ENCODE measurements at regions of chr21 and their contacts with region 1.

Region 1: GRCh38 chr21:31873696-31874599 is 1.1 kb downstream of the HUNK start:
- DNase-seq: peak; percentile 79
- H3K4me3 ChIP-seq: peak overlapping the region; percentile 69
- H3K27ac ChIP-seq: peak overlapping the region; percentile 36
- H3K4me1 ChIP-seq: no peaks in the 10 kb centered on the region
- H3K27me3 ChIP-seq: peaks cover 7% of the 10 kb centered on the region
- CTCF ChIP-seq: peak; percentile 58

Region 2: DNA sequence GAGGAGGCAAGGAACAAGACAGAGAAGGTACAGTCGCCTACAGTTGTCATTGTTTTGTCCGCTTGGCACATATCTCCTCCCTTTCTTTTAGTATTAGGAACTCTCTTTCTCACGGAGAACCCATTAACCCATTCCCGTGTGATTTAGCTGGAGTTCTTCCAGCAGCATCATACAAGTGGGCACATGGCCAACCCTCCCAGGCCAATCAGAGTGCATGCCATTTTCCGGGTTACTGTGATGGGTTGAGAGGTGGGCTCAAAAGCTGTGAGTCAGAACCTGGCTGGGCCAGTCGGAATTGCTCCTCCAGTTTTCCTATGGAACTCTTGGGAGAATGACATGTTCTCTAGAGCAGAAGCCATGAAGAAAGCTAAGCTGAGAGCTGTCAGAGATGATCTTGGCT is 297.5 kb before region 1 on chr21:
- intact Hi-C with region 1: no loop called
- DNase-seq: no peak
- H3K4me3 ChIP-seq: no peak overlapping the region
- H3K27ac ChIP-seq: no peak overlapping the region
- H3K4me1 ChIP-seq: no peaks in the 10 kb centered on the region
- H3K27me3 ChIP-seq: no peaks in the 10 kb centered on the region
- CTCF ChIP-seq: no peak

Region 3: GRCh38 chr21:31988492-31989290 is 114.7 kb after region 1 on chr21:
- intact Hi-C with region 1: loop called (anchors 10 kb)
- DNase-seq: no peak
- H3K4me3 ChIP-seq: no peak overlapping the region
- H3K27ac ChIP-seq: no peak overlapping the region
- H3K4me1 ChIP-seq: no peaks in the 10 kb centered on the region
- H3K27me3 ChIP-seq: no peaks in the 10 kb centered on the region
- CTCF ChIP-seq: no peak

Region 4: GRCh38 chr21:32475164-32475812 is 601.3 kb after region 1 on chr21:
- intact Hi-C with region 1: loop called (anchors 10 kb)
- DNase-seq: no peak
- H3K4me3 ChIP-seq: no peak overlapping the region
- H3K27ac ChIP-seq: peak overlapping the region; percentile 54
- H3K4me1 ChIP-seq: peaks cover 8% of the 10 kb centered on the region
- H3K27me3 ChIP-seq: no peaks in the 10 kb centered on the region
- CTCF ChIP-seq: no peak

Measured in colonic mucosa (tissue), 4 donors.